ENCODE measurements at regions of chr7 and their contacts with region 1.

Region 1: DNA sequence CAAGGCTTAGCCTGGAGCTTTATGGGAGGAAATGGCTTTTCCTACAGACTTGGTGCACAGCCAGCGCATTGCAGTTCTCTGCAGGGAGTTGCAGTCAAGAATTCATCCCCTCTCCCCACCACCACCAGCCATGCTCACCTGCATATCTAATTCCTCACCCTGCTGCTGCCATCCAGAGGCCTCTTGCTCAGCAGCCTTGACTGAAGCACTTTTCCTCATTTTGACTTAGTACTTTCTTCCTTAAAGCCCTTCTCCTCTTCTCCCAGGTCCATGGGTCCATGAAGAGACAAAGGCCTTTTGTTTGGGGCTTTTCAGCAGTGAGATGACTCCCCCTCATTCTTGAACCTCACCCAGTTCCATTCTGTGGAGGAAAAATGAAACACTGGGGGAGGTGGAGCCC is 39.7 kb upstream of the GPR141 start:
- DNase-seq: no peak
- H3K4me3 ChIP-seq: no peak overlapping the region
- H3K27ac ChIP-seq: no peak overlapping the region
- H3K4me1 ChIP-seq: no peaks in the 10 kb centered on the region
- H3K27me3 ChIP-seq: no peaks in the 10 kb centered on the region
- CTCF ChIP-seq: no peak
- POLR2A ChIP-seq: no peak

Region 2: DNA sequence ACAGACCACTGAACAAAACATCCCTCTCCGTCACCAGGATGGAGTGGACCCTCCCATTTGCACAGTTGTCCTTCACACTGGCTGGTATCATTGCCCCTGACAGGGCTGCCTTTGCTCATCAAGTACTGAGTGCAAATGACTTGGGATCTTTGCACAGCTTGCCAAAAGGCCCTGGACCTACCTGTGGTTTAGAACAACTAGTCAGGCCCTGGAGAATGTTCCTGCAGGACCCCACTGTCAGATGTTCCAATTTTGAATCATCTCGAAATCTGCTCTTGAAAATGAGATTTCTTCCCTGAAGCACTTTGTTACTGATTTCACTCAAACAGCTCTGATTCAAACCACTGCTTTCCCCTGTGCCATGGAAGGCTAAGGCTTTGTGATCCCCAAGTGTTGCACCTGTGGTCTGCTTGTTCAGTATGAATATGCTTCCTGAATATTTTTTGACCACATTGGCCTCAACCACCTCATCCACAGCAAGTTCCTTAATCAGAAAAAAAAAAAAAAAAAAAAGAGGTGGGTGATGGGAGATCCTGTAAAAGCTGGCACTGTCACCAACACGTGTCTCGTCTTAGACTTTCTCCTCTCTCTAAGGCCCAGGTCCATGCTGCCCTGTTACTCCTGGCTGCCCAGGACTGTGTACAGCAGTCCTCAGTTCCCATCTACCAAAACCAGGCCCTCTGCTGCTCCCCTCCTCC is 916.9 kb before region 1 on chr7:
- intact Hi-C with region 1: no loop called
- DNase-seq: no peak
- H3K4me3 ChIP-seq: no peak overlapping the region
- H3K27ac ChIP-seq: no peak overlapping the region
- H3K4me1 ChIP-seq: no peaks in the 10 kb centered on the region
- H3K27me3 ChIP-seq: no peaks in the 10 kb centered on the region
- CTCF ChIP-seq: no peak
- POLR2A ChIP-seq: no peak

Region 3: DNA sequence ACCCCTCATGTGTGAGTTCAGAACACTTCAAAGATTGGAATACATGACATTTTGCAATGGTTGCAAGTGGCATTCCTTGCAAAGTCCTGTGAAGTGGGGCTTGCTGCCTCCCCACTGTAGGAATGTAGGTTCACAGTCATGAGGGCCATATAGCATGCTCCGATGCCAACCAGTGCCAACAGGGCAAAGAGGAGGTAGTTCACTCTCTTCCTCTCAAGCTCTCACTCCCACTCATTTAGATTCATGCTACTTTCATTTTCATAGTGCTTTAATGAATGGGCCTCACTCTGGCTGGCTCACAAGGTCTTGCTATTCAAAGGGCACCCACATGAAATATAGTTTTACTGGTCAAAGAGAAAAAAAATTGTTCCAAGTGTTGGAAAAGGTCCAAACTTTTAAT is 749.7 kb before region 1 on chr7:
- intact Hi-C with region 1: no loop called
- DNase-seq: no peak
- H3K4me3 ChIP-seq: no peak overlapping the region
- H3K27ac ChIP-seq: no peak overlapping the region
- H3K4me1 ChIP-seq: no peaks in the 10 kb centered on the region
- H3K27me3 ChIP-seq: no peaks in the 10 kb centered on the region
- CTCF ChIP-seq: no peak
- POLR2A ChIP-seq: no peak

Region 4: DNA sequence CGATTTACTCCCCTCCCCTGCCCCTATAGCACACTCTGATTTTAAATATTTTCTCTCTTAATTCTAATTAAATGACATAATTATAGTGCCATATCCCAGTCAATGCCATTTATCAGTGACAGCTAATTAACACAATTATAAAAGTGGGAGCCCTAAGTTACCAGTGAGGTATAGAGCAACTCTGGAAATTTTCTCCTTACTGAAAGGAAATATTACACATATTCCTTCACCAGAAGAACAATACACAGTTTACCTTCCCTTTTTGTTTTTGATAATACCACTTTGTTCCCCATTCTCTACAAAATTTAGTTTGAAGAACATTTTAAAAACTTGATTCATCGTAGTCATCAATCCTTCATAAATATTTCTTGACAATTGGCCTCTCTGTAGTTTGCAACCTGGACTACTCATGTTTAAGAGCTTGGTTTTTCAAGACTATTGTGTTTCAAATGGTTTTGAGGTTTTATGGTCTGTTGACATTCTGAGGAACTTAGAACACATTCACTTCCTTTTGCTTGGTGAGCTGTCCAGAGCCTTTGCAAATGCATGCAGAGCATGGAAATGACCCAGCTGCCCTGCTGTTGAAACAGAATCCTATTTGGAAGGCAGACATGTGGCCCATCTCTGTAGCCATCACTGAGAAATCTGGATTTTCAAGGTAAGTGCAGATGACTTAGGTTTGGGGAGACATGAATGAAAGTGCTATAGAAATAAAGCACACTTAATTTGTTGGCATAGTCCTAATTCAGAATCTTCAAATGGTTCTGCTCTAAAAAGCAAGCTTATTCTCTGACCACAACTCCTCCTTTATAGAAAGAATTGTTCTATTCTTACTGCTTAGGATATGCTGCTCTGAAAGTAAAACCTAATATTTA is 39.6 kb after region 1 on chr7 and contains the start of gene GPR141:
- intact Hi-C with region 1: no loop called
- DNase-seq: no peak
- H3K4me3 ChIP-seq: no peak within 1 kb of the TSS
- H3K27ac ChIP-seq: no peak within 1 kb of the TSS
- H3K4me1 ChIP-seq: no peaks in the 10 kb centered on the region
- H3K27me3 ChIP-seq: no peaks in the 10 kb centered on the region
- CTCF ChIP-seq: no peak
- POLR2A ChIP-seq: no peak
- total RNA-seq, gene GPR141: 0.64 to 0.88 TPM in 2 of 3 donors, not detected in the other

Region 5: GRCh38 chr7:38000272-38000671 is 356.4 kb after region 1 on chr7:
- intact Hi-C with region 1: no loop called
- DNase-seq: no peak
- H3K4me3 ChIP-seq: no peak overlapping the region
- H3K27ac ChIP-seq: peak overlapping the region in 1 of 2 donors; percentile 23
- H3K4me1 ChIP-seq: no peaks in the 10 kb centered on the region
- H3K27me3 ChIP-seq: no peaks in the 10 kb centered on the region
- CTCF ChIP-seq: no peak
- POLR2A ChIP-seq: no peak

Region 6: GRCh38 chr7:38154278-38154677 is 510.4 kb after region 1 on chr7:
- intact Hi-C with region 1: loop called (anchors 10 kb)
- DNase-seq: no peak
- H3K4me3 ChIP-seq: no peak overlapping the region
- H3K27ac ChIP-seq: no peak overlapping the region
- H3K4me1 ChIP-seq: no peaks in the 10 kb centered on the region
- H3K27me3 ChIP-seq: no peaks in the 10 kb centered on the region
- CTCF ChIP-seq: no peak
- POLR2A ChIP-seq: no peak